Endothelial cell of umbilical vein (primary cell): ENCODE measurements at regions of chr9 and their contacts with region 1.

Region 1: DNA sequence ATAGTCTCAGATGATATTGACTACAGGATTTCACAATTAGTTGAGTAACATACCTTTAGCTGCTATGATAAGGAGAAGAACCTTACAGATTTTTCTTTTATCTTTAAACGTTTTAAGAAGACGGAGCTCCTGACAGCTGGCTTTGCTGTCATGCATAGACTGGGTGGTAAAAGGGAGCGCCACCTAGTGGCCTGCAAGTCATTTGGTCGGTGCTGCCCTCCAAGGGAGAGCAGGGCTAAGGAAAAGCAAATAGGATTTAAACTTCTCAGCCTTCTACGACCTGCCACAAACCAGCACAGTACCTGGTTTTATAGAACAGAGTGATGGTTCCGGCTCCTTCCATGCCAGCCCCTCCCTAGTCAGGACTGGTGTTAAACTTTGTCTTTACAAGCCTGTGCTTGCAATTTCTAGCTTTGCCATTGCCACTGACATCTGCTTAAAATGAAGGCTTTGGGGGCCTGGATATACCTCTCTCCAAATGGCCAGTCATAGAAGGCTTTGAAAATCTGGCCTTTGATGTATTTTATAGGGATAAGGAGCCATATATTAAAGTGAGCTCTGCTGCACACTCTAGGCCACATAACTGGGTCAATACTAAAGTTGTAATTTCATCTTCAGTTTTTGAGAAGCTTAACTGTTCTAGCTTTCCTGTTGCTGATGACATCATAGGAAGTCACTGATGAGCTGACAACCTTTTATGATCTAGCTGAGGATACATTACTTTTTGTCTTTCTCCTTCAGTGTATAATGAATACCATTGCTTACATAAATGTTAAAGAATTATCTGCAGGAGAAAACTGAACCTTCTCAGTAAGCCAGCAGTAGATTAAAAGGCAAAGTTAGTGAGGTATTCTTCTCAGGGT is 31.1 kb upstream of the ADAMTSL1 start:
- DNase-seq: peak; percentile 87
- H3K4me3 ChIP-seq: no peak overlapping the region
- H3K27ac ChIP-seq: no peak overlapping the region
- H3K4me1 ChIP-seq: peaks cover 24% of the 10 kb centered on the region
- H3K27me3 ChIP-seq: no peaks in the 10 kb centered on the region
- CTCF ChIP-seq: peak; percentile 87 to 97
- POLR2A ChIP-seq: no peak

Region 2: DNA sequence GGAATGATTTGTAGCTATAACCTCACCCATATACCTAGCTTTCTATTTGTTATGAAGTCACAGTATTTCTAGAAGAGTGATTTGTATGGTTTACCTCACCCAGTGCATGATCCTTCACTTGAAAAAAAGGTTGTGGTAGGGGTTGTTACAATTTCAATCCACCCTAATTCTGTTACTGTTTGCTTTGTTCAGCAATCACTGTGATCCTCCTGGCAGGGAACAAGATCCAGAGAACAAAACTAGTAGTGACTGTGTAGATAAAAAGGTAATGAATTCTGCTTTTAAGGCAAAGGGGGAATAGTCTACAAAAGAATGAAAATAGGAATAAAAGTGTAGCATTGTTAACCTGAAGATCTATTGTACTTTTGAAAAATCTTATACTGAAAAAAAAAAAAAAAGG is 1055.3 kb before region 1 on chr9:
- CTCF ChIA-PET with region 1: no interaction called
- POLR2A ChIA-PET with region 1: no interaction called
- dilution Hi-C with region 1: no loop called
- intact Hi-C with region 1: no loop called
- DNase-seq: no peak
- H3K4me3 ChIP-seq: no peak overlapping the region
- H3K27ac ChIP-seq: no peak overlapping the region
- H3K4me1 ChIP-seq: no peaks in the 10 kb centered on the region
- H3K27me3 ChIP-seq: no peaks in the 10 kb centered on the region
- CTCF ChIP-seq: no peak
- POLR2A ChIP-seq: no peak

Region 3: GRCh38 chr9:17453751-17454150 is 989.1 kb before region 1 on chr9:
- CTCF ChIA-PET with region 1: no interaction called
- POLR2A ChIA-PET with region 1: no interaction called
- dilution Hi-C with region 1: no loop called
- intact Hi-C with region 1: no loop called
- DNase-seq: no peak
- H3K4me3 ChIP-seq: no peak overlapping the region
- H3K27ac ChIP-seq: no peak overlapping the region
- H3K4me1 ChIP-seq: peaks cover 2% of the 10 kb centered on the region
- H3K27me3 ChIP-seq: no peaks in the 10 kb centered on the region
- CTCF ChIP-seq: no peak
- POLR2A ChIP-seq: no peak

Region 4: GRCh38 chr9:18208154-18209059 is 234.5 kb before region 1 on chr9:
- CTCF ChIA-PET with region 1: interaction called, 25 read pairs
- POLR2A ChIA-PET with region 1: no interaction called
- dilution Hi-C with region 1: no loop called
- intact Hi-C with region 1: no loop called
- DNase-seq: peak; percentile 52
- H3K4me3 ChIP-seq: no peak overlapping the region
- H3K27ac ChIP-seq: no peak overlapping the region
- H3K4me1 ChIP-seq: no peaks in the 10 kb centered on the region
- H3K27me3 ChIP-seq: no peaks in the 10 kb centered on the region
- CTCF ChIP-seq: peak; percentile 39 to 62
- POLR2A ChIP-seq: no peak

Region 5: GRCh38 chr9:18319918-18320445 is 122.9 kb before region 1 on chr9:
- CTCF ChIA-PET with region 1: interaction called, 10 read pairs
- POLR2A ChIA-PET with region 1: no interaction called
- dilution Hi-C with region 1: no loop called
- intact Hi-C with region 1: no loop called
- DNase-seq: peak; percentile 71
- H3K4me3 ChIP-seq: no peak overlapping the region
- H3K27ac ChIP-seq: no peak overlapping the region
- H3K4me1 ChIP-seq: no peaks in the 10 kb centered on the region
- H3K27me3 ChIP-seq: no peaks in the 10 kb centered on the region
- CTCF ChIP-seq: peak in 1 of 2 donors; percentile 16
- POLR2A ChIP-seq: no peak

Region 6: DNA sequence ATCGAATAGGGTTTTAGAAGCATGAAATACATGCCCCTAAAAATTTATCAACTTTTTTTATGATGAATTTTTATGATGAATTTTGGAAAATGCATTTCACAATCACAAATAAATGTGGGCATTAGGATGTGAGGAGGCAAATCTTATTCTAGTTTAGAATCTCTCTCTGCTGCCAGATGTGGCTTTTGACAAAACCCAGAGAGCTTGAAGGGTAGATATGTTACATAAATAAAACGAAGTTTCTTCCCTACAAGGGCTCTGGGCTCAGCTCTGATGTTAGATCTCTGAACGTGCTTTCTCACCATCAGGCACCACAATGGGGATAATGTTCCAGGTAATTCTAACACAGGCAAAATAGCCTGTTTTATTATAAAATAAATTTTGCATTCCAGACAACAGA is 71.2 kb before region 1 on chr9:
- CTCF ChIA-PET with region 1: no interaction called
- POLR2A ChIA-PET with region 1: no interaction called
- dilution Hi-C with region 1: no loop called
- intact Hi-C with region 1: no loop called
- DNase-seq: no peak
- H3K4me3 ChIP-seq: no peak overlapping the region
- H3K27ac ChIP-seq: no peak overlapping the region
- H3K4me1 ChIP-seq: no peaks in the 10 kb centered on the region
- H3K27me3 ChIP-seq: no peaks in the 10 kb centered on the region
- CTCF ChIP-seq: no peak
- POLR2A ChIP-seq: no peak

Region 7: DNA sequence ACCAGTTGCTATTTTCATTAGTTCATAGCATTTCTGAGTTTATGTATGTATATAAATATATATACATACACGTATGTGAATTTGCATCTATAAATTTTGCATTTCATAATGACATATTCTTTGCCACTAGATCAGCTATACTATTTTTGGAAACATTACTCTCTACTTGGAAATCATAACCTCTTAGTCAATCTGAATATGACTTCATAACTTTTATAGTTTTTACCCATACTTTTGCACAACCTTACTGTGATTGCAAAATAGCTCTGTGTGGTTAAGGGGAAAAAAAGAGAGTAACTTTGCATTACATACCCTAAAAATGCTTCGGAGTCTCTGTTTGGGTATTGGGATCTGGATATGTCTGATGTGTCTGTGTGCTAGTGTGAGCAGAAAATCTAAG is 13.8 kb before region 1 on chr9:
- CTCF ChIA-PET with region 1: interaction called, 22 read pairs
- POLR2A ChIA-PET with region 1: interaction called, 3 read pairs
- dilution Hi-C with region 1: no loop called
- intact Hi-C with region 1: no loop called
- DNase-seq: no peak
- H3K4me3 ChIP-seq: no peak overlapping the region
- H3K27ac ChIP-seq: no peak overlapping the region
- H3K4me1 ChIP-seq: peaks cover 9% of the 10 kb centered on the region
- H3K27me3 ChIP-seq: no peaks in the 10 kb centered on the region
- CTCF ChIP-seq: no peak
- POLR2A ChIP-seq: no peak

Region 8: DNA sequence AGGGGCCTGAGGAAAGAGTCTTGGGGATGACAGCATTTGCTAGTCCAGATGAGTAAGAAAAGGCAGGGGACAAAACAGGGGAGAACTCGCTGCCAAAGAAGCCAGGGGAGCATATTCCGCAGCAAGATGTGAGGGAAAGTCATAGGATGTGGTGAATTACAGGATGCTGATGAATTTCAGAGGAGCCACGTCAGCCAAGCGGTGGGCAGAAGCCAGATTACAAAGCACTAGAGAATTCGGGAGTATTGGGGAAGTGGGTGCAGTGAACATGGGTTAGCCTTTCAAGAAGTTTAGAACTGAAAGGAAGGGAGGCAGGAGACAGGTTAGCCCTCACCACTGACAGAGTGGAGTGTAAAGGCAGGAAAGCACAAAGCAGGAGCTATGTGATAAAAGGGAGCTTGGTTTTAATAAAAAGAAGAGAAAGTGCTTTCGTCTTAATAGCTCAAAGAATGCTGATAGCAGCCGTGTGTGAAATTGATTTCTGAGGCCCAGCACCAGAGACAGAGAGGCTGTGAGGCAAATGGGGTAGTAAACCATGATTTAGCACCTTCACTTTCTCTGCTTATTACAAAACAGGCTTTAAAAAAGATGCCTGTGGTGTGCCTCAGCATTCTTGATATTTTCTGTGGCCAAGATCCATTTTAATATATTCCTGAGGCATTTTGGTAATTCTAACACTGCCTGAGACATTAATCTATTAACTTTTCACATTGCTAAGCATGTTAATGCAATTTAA is 47.9 kb after region 1 on chr9:
- CTCF ChIA-PET with region 1: interaction called, 31 read pairs
- POLR2A ChIA-PET with region 1: no interaction called
- dilution Hi-C with region 1: no loop called
- intact Hi-C with region 1: loop called (anchors 1 kb)
- DNase-seq: peak; percentile 96
- H3K4me3 ChIP-seq: peak overlapping the region in 2 of 3 experiments; percentile 8 to 25
- H3K27ac ChIP-seq: peak overlapping the region; percentile 96
- H3K4me1 ChIP-seq: peaks cover 50% of the 10 kb centered on the region
- H3K27me3 ChIP-seq: no peaks in the 10 kb centered on the region
- CTCF ChIP-seq: no peak
- POLR2A ChIP-seq: peak; percentile 31

Region 9: GRCh38 chr9:18791074-18791473 is 348.2 kb after region 1 on chr9:
- CTCF ChIA-PET with region 1: interaction called, 3 read pairs
- POLR2A ChIA-PET with region 1: no interaction called
- dilution Hi-C with region 1: no loop called
- intact Hi-C with region 1: loop called (anchors 1 kb)
- DNase-seq: no peak
- H3K4me3 ChIP-seq: no peak overlapping the region
- H3K27ac ChIP-seq: no peak overlapping the region
- H3K4me1 ChIP-seq: peaks cover 18% of the 10 kb centered on the region
- H3K27me3 ChIP-seq: no peaks in the 10 kb centered on the region
- CTCF ChIP-seq: peak; percentile 25 to 36
- POLR2A ChIP-seq: no peak

Region 10: GRCh38 chr9:19174127-19174912 is 731.5 kb after region 1 on chr9:
- CTCF ChIA-PET with region 1: interaction called, 3 read pairs
- POLR2A ChIA-PET with region 1: no interaction called
- dilution Hi-C with region 1: no loop called
- intact Hi-C with region 1: loop called (anchors 2 kb)
- DNase-seq: peak; percentile 68
- H3K4me3 ChIP-seq: no peak overlapping the region
- H3K27ac ChIP-seq: no peak overlapping the region
- H3K4me1 ChIP-seq: peaks cover 15% of the 10 kb centered on the region
- H3K27me3 ChIP-seq: no peaks in the 10 kb centered on the region
- CTCF ChIP-seq: peak; percentile 40 to 47
- POLR2A ChIP-seq: no peak